Psoas muscle (tissue), 8 donors: ENCODE measurements at regions of chr7 and their contacts with region 1.

Region 1: DNA sequence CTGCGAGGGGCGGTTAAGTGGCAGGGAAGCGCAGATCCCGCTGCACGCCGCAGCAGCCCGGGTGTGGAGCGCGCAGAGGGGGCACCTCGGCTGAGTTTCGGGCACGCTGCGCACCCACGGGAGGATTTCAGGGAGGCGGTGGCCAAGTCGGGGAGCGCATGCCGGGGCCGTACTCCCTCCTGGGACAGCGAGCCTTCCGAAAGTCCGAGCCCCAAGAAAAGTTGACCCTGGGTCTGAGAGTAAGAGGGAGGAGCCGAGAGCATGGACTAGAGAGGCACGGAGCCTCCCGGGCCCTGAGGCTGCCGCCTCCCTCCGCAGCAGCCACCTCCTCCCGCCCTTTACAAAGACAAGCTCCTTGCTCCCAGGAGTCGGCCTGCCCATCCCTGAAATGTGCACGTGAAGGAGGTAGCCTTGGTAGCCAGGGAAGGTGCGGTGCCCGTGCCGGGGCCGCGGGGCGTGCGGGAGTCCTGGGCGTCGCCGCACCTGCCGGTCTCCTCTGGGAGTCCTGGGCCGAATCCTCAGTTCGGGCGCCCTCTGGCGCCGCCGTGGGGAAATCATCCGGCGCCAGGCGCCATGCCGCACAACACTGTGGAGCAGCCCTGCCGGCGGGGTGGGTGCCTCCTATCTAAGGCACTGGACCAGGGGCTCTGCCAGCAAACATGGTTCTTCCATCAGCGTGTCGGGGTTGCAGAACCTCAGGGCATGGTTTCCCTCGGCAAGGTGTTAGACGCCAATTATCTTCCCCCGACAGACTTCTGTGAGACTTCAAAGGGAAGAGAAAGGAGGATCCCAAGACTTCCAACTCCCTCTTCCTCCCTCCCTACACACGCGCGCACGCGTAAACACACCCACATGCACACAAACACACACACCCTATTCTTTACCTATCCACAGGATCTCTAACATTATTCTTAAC is 104.0 kb downstream of the TRIL start:
- DNase-seq: peak; percentile 77 to 91
- ATAC-seq: peak; percentile 97 to 100 (median 100)
- H3K4me3 ChIP-seq: peak overlapping the region; percentile 71
- H3K27ac ChIP-seq: no peak overlapping the region
- H3K4me1 ChIP-seq: peaks cover 3% of the 10 kb centered on the region
- H3K27me3 ChIP-seq: peaks cover 0 to 2% (median 0%) of the 10 kb centered on the region in 3 donors
- CTCF ChIP-seq: peak; percentile 92

Region 2: DNA sequence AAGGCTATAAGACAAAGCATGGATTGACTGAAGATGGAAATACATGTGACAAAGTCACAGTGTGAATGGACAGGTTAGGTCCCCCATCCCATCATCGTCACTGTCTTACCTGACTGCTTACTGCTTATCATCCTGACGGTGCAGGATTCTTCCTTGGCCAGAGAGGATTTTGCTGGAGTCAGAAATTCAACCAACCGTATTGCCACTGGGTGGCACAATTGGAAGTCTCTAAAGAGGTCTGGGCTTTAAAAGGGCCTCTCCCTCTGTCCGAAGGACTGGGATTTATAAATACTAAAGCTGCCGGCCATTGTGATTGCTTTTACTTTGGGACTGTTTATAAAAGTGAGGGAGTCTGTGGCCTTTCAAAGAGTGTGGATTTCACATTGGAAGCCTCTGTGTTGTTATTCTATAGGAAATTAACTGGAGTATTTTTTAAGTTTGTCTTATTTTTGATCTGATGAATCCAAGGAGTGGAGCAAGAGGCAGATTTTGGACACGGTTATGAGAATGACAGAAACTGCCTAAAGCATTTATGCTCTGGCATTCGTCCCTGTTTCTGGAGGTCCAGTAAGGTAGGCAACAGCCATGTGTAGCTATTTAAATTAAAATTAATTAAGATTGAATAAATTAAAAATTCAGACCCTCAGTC is 555.1 kb before region 1 on chr7:
- intact Hi-C with region 1: loop called (anchors 2 to 10 kb)
- DNase-seq: no peak
- ATAC-seq: peak; percentile 72 to 81 (median 76)
- H3K4me3 ChIP-seq: no peak overlapping the region
- H3K27ac ChIP-seq: no peak overlapping the region
- H3K4me1 ChIP-seq: no peaks in the 10 kb centered on the region
- H3K27me3 ChIP-seq: no peaks in the 10 kb centered on the region
- CTCF ChIP-seq: peak; percentile 41

Region 3: GRCh38 chr7:28389504-28390395 is 464.3 kb before region 1 on chr7:
- intact Hi-C with region 1: loop called (anchors 1 to 2 kb)
- DNase-seq: no peak
- ATAC-seq: peak in 3 of 4 donors; percentile 37 to 82 (median 66)
- H3K4me3 ChIP-seq: peak overlapping the region; percentile 56
- H3K27ac ChIP-seq: no peak overlapping the region
- H3K4me1 ChIP-seq: no peaks in the 10 kb centered on the region
- H3K27me3 ChIP-seq: no peaks in the 10 kb centered on the region
- CTCF ChIP-seq: peak; percentile 89

Region 4: DNA sequence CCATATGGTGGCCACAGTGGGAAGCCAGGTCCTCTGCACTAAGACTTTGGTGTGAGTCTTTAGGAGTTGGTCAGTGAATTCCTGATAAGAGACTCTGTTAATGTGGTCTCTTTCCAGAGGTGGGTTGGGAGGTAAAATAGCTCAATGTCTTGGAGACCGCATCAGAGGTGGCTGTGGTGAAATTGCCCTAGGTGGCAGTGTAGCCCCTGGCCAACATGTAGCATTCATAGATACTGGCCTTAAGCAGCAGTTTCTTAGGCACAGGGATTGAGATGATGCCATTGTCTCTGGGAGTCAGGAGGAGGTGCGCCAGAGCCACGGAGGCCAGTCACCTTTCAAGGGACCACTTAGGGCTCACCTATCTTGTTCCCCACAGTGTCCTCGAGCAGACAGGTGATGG is 239.0 kb before region 1 on chr7:
- intact Hi-C with region 1: loop called (anchors 1 to 2 kb)
- DNase-seq: no peak
- ATAC-seq: peak; percentile 38 to 83 (median 62)
- H3K4me3 ChIP-seq: no peak overlapping the region
- H3K27ac ChIP-seq: no peak overlapping the region
- H3K4me1 ChIP-seq: peaks cover 4% of the 10 kb centered on the region
- H3K27me3 ChIP-seq: no peaks in the 10 kb centered on the region
- CTCF ChIP-seq: peak; percentile 23